HEK293 (cell line): ENCODE measurements at regions of chr20 and their contacts with region 1.

Region 1: DNA sequence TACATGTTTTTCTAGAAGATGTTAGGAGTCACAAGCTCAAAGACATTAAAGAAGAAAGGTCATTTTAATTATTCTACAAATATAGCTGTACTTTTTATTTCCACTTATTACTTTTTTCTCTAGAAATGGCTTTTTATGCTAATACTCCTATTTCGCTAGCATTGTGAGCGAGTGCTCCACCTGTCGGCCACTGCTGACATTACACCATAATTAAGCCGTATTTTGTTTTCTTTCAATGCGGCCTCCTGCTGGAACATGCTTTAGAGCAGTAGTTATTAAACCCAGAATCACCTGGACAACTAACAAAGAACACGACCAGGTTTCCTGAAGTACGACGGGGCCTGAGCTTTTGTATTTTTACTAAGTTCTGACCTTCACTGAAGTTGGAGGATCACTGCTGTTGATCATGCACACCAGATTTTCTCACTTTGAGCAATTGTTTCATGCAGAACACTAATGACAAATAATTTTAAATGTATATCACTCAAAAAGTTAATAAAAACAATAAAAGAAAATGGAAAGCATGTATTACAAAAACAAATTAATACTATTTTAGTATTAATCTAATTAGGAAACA is 74.1 kb upstream of the PAK5 start:
- H3K4me3 ChIP-seq: no peak overlapping the region
- H3K27ac ChIP-seq: no peak overlapping the region
- H3K4me1 ChIP-seq: no peaks in the 10 kb centered on the region
- CTCF ChIP-seq: no peak

Region 2: GRCh38 chr20:9555781-9556180 is 357.2 kb before region 1 on chr20:
- CTCF ChIA-PET with region 1: no interaction called
- POLR2A ChIA-PET with region 1: no interaction called
- H3K4me3 ChIP-seq: no peak overlapping the region
- H3K27ac ChIP-seq: no peak overlapping the region
- H3K4me1 ChIP-seq: no peaks in the 10 kb centered on the region
- CTCF ChIP-seq: no peak

Region 3: DNA sequence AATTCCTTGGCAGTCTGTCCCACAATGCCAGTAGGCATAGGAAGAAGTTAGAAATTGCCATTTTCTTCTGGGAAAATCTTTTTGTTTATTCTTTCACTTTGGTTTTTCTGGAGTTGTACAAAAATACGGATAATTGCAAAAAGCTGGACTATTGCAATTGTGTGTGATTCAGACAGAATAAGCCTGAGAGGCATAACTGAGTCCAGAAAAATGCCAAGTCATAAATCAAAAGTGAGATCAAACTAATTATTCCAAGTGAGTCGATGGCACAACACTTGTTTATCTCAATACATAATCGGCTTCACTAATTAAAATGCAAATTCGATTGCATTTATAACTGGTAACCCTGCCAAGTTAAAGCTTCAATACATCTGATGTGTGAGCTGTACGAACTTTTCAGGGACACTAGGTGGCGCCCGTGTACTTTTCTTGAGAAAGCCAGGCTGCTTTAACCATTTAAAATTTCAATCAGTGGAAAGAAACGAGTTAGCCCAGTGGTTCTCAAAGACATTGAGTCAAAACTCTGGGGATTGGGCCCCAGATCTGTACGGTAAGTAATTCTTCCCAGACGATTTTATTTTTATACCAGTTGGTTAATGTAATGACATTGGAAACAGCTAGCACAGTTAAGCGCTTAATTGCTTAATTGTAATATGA is 296.0 kb before region 1 on chr20:
- CTCF ChIA-PET with region 1: interaction called, 41 read pairs
- POLR2A ChIA-PET with region 1: no interaction called
- H3K4me3 ChIP-seq: no peak overlapping the region
- H3K27ac ChIP-seq: no peak overlapping the region
- H3K4me1 ChIP-seq: no peaks in the 10 kb centered on the region
- CTCF ChIP-seq: 0 out of 2 replicates have a peak, but pooled peaks have one; percentile 10

Region 4: GRCh38 chr20:9939231-9939630 is 26.3 kb after region 1 on chr20:
- CTCF ChIA-PET with region 1: no interaction called
- POLR2A ChIA-PET with region 1: no interaction called
- H3K4me3 ChIP-seq: no peak overlapping the region
- H3K27ac ChIP-seq: no peak overlapping the region
- H3K4me1 ChIP-seq: no peaks in the 10 kb centered on the region
- CTCF ChIP-seq: no peak